ENCODE measurements at regions of chr6 and their contacts with region 1.

Region 1: DNA sequence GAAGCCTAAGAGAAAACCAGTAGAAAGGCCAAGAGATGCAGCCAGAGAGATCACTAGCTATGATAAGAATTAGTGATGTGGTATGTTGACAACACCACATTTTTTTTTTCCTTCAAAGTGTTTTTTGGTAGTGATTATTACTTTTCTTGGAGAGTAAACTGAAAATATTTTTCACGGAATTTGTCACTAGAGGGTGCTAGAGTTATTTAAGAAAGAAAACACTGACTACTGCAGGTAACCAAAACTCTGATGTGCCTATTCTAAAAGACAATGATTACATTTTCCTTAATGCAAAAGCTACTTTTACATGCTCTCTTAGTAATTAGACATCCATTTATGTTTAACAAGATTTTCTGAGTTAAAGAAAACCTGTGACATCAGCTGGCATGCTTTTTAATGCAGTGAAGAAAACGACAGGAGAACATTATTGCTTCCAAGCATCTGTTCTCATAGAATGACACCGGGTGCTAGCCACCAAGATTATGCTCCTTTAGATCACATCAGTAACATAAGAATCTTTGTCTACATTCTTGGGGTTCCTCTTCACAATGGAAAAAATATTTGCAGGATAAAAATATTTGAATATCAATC is 28.8 kb downstream of the RWDD2A start:
- DNase-seq: peak; percentile 54
- ATAC-seq: 0 out of 2 replicates have a peak, but pooled peaks have one; percentile 19
- H3K4me3 ChIP-seq: no peak overlapping the region
- H3K27ac ChIP-seq: no peak overlapping the region
- H3K4me1 ChIP-seq: peaks cover 5% of the 10 kb centered on the region
- H3K27me3 ChIP-seq: no peaks in the 10 kb centered on the region
- CTCF ChIP-seq: peak; percentile 63
- POLR2A ChIP-seq: peak; percentile 49
- RAD21 ChIP-seq: peak; percentile 67

Region 2: GRCh38 chr6:83381949-83382348 is 160.0 kb after region 1 on chr6:
- CTCF ChIA-PET with region 1: no interaction called
- POLR2A ChIA-PET with region 1: no interaction called
- dilution Hi-C with region 1: no loop called
- in situ Hi-C with region 1: no loop called
- intact Hi-C with region 1: loop called (anchors 2 kb)
- DNase-seq: no peak
- ATAC-seq: no peak
- H3K4me3 ChIP-seq: no peak overlapping the region
- H3K27ac ChIP-seq: no peak overlapping the region
- H3K4me1 ChIP-seq: peaks cover 7% of the 10 kb centered on the region; the same call in 1 of the 2 replicates
- H3K27me3 ChIP-seq: no peaks in the 10 kb centered on the region
- CTCF ChIP-seq: no peak
- POLR2A ChIP-seq: no peak
- RAD21 ChIP-seq: no peak

Region 3: DNA sequence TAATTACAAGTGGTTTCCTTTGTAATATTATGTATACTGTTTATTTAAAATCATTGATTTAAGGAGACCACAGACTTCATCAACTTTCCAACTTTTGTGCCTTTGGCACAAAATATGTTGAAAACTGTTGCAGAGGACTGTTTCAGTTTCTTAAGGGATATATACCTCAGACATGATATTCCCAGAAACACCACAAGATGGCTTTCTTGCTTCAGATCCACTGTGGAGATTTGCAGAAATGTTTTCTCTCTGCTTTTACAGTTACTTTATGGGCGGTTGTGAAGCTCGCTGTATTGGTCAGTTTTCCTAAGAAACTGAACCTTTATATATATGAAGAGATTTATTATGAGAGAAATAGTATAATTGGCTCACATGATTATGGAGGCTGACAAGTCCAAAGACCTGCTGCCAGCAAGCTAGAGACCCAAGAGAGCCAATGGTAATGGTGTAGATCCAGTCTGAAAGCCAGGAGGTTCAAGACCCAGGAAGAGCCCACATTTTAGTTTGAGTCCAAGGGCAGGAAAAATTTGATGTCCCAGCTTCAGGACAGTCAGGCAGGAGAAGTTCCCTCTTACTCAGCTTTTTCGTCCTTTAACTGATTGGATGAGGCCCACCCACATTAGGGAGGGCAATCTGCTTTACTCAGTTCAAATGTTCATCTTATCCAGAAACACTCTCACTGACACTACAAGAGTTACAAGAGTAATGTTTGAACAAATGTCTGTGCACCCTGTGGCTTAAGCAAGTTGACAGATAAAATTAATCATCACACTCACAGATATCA is 196.1 kb after region 1 on chr6:
- CTCF ChIA-PET with region 1: interaction called, 7 read pairs
- POLR2A ChIA-PET with region 1: no interaction called
- dilution Hi-C with region 1: no loop called
- in situ Hi-C with region 1: no loop called
- intact Hi-C with region 1: loop called (anchors 1 kb)
- DNase-seq: peak; percentile 79
- ATAC-seq: peak; percentile 93
- H3K4me3 ChIP-seq: no peak overlapping the region
- H3K27ac ChIP-seq: no peak overlapping the region
- H3K4me1 ChIP-seq: 0 out of 2 replicates have a peak, but pooled peaks cover 2% of the 10 kb centered on the region
- H3K27me3 ChIP-seq: no peaks in the 10 kb centered on the region
- CTCF ChIP-seq: peak; percentile 76
- POLR2A ChIP-seq: no peak
- RAD21 ChIP-seq: peak; percentile 71

Region 4: DNA sequence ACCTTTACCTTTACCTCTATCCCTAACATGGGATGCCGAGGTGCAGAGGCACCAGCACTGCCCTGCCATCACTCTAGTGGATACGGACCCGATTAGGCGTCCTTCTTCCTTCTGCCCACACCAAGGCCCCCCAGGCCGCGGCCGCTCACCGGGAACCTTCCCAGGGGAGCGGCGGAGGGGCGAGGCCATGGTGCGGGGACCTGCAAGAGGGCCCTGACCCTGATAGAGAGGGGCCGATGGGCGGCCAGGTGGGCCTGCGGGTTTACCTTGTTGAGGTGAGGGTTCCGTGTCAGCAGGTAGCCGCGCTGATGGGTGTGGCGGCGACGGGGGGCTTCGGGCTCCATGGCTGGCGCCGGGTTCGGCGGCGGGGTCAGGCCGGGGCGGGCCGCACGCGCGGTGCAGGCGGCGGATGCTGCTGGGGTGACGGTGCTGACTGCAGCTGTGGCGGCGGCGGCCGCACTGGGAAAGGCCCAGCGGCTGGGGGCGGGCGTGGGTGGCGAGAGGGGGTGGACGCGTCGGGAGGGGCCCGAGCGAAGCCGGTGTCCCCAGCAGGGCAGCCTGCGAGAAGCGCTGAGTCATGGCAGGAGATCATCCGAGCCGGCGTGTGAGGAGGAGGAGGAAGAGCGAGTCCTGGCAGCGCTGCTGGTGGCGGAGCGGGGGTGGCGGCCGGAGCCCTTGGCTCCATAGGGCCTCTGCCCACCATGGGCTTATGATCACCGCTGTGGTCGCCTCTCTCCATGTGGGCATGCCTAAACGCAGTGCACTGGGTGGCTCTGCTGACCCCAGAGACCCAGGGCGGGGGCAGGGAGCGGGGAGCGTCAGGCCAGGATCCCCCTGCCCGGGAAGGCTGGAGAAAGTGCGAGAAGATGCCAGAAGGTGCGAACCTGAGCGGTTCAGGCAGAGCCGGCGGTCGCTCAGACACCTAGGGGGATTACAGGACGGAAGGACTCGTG is 208.9 kb after region 1 on chr6 and contains the start of gene ME1:
- CTCF ChIA-PET with region 1: interaction called, 3 read pairs
- POLR2A ChIA-PET with region 1: no interaction called
- dilution Hi-C with region 1: no loop called
- in situ Hi-C with region 1: no loop called
- intact Hi-C with region 1: loop called (anchors 5 kb)
- DNase-seq: peak; percentile 86
- ATAC-seq: peak; percentile 94
- H3K4me3 ChIP-seq: peak within 1 kb of the TSS; percentile 97
- H3K27ac ChIP-seq: peak within 1 kb of the TSS; percentile 74
- H3K4me1 ChIP-seq: peaks cover 7% of the 10 kb centered on the region
- H3K27me3 ChIP-seq: no peaks in the 10 kb centered on the region
- CTCF ChIP-seq: no peak
- POLR2A ChIP-seq: peak; percentile 48
- RAD21 ChIP-seq: no peak
- total RNA-seq, gene ME1: 24.4 and 32.2 TPM in 2 replicates

Measured in IMR-90 (cell line).